Posterior vena cava (tissue), 2 donors: ENCODE measurements at regions of chr13 and their contacts with region 1.

Region 1: DNA sequence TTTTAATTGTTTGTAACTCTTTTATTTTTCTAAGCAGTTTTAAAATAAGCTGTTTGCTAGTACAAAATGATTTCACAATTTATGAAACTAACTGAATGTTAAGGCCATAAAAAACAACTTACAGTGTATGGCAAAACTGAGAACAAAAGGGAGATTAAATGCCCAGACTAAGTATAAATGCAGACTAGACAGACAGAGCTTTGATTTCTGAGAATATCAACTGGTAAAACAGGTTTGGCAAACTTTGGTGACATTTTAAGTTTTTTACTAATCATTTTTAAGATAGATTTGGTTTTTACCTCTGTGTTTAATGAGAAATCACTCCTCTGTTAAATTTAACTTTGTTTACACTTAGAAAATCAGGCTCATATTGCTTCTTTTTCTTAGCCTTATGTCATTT is 127.5 kb upstream of the KLF5 start:
- DNase-seq: no peak

Region 2: GRCh38 chr13:72727417-72728289 is 203.7 kb before region 1 on chr13 and contains the starts of genes BORA and MZT1:
- intact Hi-C with region 1: loop called in 1 of 2 experiments (anchors 5 kb)
- DNase-seq: peak; percentile 98
- total RNA-seq, gene BORA: 1.8 to 2.2 TPM
- total RNA-seq, gene MZT1: 5.8 to 10.1 TPM

Region 3: GRCh38 chr13:73171926-73172325 is 240.6 kb after region 1 on chr13:
- intact Hi-C with region 1: no loop called
- DNase-seq: no peak

Region 4: GRCh38 chr13:73303851-73304250 is 372.5 kb after region 1 on chr13:
- intact Hi-C with region 1: no loop called
- DNase-seq: no peak

Region 5: DNA sequence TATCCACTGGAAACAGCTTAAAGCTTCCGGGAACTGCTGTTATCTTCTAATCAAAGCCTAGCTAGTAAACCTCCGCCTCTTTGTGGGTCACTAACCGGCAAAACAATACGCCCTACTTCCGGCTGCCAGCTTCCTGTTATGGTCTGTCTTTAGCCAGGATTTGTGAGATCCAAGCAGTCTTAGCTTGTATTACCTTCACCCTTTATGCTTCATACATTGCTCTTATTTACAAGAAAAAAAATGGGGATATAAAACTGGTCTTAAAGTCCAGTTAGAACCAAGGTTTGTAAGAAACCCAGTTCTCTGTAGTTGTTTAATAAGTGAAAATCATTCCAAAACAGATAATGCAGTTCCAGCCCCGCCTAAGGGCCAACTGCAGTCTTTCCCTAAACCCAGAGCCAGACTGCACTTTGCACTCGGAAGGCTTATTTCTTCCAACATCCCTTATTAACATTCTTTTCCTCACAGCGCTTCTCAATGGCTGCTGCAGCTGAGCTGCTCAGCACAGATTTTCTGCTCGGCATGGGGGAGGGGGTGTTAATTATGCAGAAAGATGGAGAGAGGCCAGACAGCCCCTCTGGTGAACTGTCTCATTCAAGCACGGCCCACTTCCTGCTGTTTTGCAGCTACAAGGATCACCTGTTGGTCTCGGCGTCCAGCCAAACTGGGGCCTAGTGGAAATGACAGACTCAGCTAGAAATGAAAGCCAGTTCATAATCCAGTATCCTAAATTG is 834.5 kb after region 1 on chr13:
- intact Hi-C with region 1: no loop called
- DNase-seq: peak; percentile 85